CD14-positive monocyte (primary cell): ENCODE measurements at regions of chr6 and their contacts with region 1.

Region 1: GRCh38 chr6:46772762-46773161 is 20.4 kb upstream of the MEP1A start:
- DNase-seq: peak; percentile 93 to 98 (median 98)
- H3K4me3 ChIP-seq: peak overlapping the region in 1 of 3 experiments; percentile 27
- H3K4me3 Mint-ChIP-seq: peak overlapping the region in 1 of 2 donors; percentile 67
- H3K27ac ChIP-seq: peak overlapping the region; percentile 91 to 95
- H3K27ac Mint-ChIP-seq: peak overlapping the region; percentile 98 to 100 (median 99)
- H3K4me1 ChIP-seq: peaks cover 54 to 60% of the 10 kb centered on the region in 2 donors
- H3K4me1 Mint-ChIP-seq: peaks cover 50% of the 10 kb centered on the region
- H3K27me3 ChIP-seq: no peaks in the 10 kb centered on the region
- H3K27me3 Mint-ChIP-seq: no peaks in the 10 kb centered on the region
- CTCF ChIP-seq: no peak

Region 2: DNA sequence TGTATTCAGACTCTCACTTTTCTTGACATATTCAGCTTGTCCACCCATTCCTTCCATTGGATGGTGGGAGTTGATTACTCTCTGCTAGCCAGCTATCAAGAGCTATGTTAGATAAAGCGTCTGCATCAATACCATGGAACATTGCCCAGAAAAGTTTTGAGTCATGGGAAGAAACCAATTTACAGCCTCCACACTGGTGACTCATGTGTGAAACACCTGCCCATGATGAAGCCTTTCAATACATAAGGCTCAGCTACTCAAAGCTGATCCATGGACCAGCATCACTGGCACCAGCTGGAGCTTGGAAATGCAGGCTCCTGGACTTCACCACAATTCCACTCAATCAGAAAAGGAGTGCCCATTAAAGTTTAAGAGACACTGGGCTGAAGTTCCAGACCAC is 53.7 kb before region 1 on chr6:
- intact Hi-C with region 1: loop called in 1 of 2 experiments (anchors 5 kb)
- DNase-seq: peak in 1 of 3 donors; percentile 41
- H3K4me3 ChIP-seq: no peak overlapping the region
- H3K4me3 Mint-ChIP-seq: no peak overlapping the region
- H3K27ac ChIP-seq: no peak overlapping the region
- H3K27ac Mint-ChIP-seq: peak overlapping the region in 1 of 7 donors; percentile 21
- H3K4me1 ChIP-seq: peaks cover 42 to 48% of the 10 kb centered on the region in 2 donors
- H3K4me1 Mint-ChIP-seq: peaks cover 47% of the 10 kb centered on the region
- H3K27me3 ChIP-seq: no peaks in the 10 kb centered on the region
- H3K27me3 Mint-ChIP-seq: no peaks in the 10 kb centered on the region
- CTCF ChIP-seq: no peak

Region 3: GRCh38 chr6:46734867-46735719 is 37.7 kb before region 1 on chr6 and contains the start of gene PLA2G7:
- intact Hi-C with region 1: loop called (anchors 5 kb)
- DNase-seq: peak; percentile 17 to 33 (median 24)
- H3K4me3 ChIP-seq: peak within 1 kb of the TSS; percentile 75 to 89 (median 81)
- H3K4me3 Mint-ChIP-seq: peak within 1 kb of the TSS; percentile 96
- H3K27ac ChIP-seq: peak within 1 kb of the TSS; percentile 33 to 67
- H3K27ac Mint-ChIP-seq: peak within 1 kb of the TSS; percentile 81 to 93 (median 87)
- H3K4me1 ChIP-seq: peaks cover 43 to 62% of the 10 kb centered on the region in 2 donors
- H3K4me1 Mint-ChIP-seq: peaks cover 59% of the 10 kb centered on the region
- H3K27me3 ChIP-seq: peaks cover 9 to 14% of the 10 kb centered on the region in 2 donors
- H3K27me3 Mint-ChIP-seq: peaks cover 12 to 43% (median 33%) of the 10 kb centered on the region in 3 donors
- CTCF ChIP-seq: no peak
- polyA plus RNA-seq, gene PLA2G7: 10.2 to 53.5 (median 24.4) TPM